ENCODE measurements at regions of chr16 and their contacts with region 1.

Region 1: DNA sequence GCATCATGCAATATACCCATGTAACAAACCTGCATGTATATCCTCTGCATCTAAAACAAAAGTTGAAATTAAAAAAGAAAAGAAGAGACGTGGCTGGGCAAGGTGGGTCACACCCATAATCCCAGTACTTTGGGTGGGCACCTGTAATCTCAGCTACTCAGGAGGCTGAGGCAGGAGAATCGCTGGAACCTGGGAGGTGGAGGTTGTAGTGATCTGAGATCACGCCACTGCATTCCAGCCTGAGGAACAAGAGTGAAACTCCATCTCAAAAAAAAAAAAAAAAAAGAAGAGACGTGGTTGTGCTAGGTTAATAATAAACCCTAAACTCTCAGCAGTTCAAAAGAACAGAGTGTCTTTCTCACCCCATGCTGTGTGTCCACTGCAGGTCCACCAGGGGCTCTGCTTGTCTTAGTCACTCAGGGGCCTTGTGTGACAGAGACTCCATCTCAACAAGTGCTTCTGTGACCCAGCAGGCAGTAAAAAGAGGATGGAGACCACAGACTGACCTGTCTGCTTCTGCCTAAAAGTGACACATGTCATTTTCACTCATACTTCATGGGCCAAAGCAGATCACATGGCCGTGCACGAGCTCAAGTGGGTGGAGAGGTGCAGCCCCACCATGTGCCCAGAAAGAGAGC is 22.3 kb upstream of the N4BP1 start:
- DNase-seq: no peak
- H3K4me3 ChIP-seq: no peak overlapping the region
- H3K27ac ChIP-seq: no peak overlapping the region
- H3K4me1 ChIP-seq: no peaks in the 10 kb centered on the region; a peak in 2 of 4 replicates
- H3K27me3 ChIP-seq: no peaks in the 10 kb centered on the region
- CTCF ChIP-seq: no peak
- EP300 ChIP-seq: no peak
- RAD21 ChIP-seq: no peak

Region 2: GRCh38 chr16:48164907-48165726 is 467.1 kb before region 1 on chr16:
- CTCF ChIA-PET with region 1: interaction called, 10 read pairs
- POLR2A ChIA-PET with region 1: no interaction called
- DNase-seq: peak; percentile 88
- H3K4me3 ChIP-seq: peak overlapping the region in 1 of 2 experiments; percentile 12; a peak in 1 of 4 replicates
- H3K27ac ChIP-seq: no peak overlapping the region
- H3K4me1 ChIP-seq: peaks cover 0 to 4% of the 10 kb centered on the region in 2 experiments; a peak in 1 of 4 replicates
- H3K27me3 ChIP-seq: no peaks in the 10 kb centered on the region
- CTCF ChIP-seq: peak; percentile 88
- EP300 ChIP-seq: no peak
- RAD21 ChIP-seq: peak; percentile 93

Region 3: DNA sequence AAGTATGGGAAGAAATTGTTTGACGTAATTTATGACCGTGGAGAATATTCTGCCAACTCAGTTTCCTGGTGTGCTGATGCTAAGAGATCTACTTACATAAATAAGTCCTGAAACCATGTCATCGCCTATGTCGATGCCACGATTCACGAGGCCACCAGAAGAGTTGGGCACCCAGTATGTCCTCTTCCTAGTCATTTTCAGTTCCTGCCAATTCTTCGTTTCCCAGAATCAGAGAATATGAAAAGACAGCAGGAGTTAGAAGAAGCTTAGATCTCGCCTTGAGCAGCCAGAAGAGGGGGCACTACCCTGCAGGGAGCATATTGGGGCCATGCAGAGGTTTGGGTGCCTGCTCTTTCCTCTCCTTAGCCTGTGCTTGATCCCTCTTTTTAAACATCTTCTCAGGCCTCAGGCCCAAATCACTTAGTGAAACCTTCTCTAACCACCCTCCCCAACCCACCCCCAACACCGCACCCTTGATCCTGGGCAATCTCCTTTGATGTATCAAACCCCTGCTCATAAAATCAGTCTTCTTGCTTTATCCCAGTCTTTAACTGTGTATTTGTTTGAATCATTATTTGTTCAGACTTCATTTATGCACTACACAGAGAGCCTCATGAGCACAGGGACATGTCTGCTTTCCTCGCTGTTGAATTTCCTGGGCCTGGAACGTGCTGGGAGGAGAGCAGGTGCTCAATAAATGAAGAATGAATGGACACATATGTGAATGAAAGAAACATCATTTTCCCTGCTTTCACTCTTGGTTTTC is 400.3 kb before region 1 on chr16:
- CTCF ChIA-PET with region 1: interaction called, 19 read pairs
- POLR2A ChIA-PET with region 1: no interaction called
- DNase-seq: peak; percentile 45
- H3K4me3 ChIP-seq: no peak overlapping the region
- H3K27ac ChIP-seq: no peak overlapping the region
- H3K4me1 ChIP-seq: no peaks in the 10 kb centered on the region
- H3K27me3 ChIP-seq: no peaks in the 10 kb centered on the region
- CTCF ChIP-seq: peak; percentile 44
- EP300 ChIP-seq: no peak
- RAD21 ChIP-seq: peak; percentile 52

Region 4: GRCh38 chr16:48256579-48257177 is 375.6 kb before region 1 on chr16:
- CTCF ChIA-PET with region 1: interaction called, 14 read pairs
- POLR2A ChIA-PET with region 1: no interaction called
- DNase-seq: no peak
- H3K4me3 ChIP-seq: no peak overlapping the region
- H3K27ac ChIP-seq: no peak overlapping the region
- H3K4me1 ChIP-seq: no peaks in the 10 kb centered on the region
- H3K27me3 ChIP-seq: no peaks in the 10 kb centered on the region
- CTCF ChIP-seq: no peak
- EP300 ChIP-seq: no peak
- RAD21 ChIP-seq: no peak

Region 5: DNA sequence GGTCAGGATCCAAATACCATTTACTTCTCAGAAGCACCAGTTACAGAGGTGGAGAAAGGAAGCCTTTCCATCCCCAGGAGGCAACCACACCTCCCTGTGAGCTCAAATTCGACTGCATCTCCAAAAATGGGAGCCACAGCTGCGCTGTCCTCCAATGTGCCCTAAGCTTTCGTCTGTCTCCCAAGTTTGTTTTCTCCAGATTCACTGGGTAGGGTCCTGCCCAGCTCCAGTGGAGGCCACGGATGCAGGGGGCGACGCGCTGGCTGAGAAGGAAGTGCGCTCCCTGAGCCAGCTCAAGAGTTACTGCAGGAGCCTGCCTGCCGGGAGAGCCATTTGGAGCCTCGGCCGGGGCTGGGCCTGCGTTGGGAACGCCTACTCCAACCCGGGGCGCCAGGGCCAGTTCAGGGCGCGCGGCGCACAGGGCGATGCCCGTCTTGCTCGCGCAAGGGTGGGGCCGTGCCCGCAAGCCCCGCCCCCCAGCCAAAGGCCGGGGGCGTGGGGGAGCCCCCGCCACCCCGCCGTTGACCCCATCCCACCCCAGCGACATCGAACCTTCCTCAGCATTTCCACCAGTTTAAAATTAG is 266.6 kb before region 1 on chr16:
- CTCF ChIA-PET with region 1: interaction called, 12 read pairs
- POLR2A ChIA-PET with region 1: no interaction called
- DNase-seq: peak; percentile 90
- H3K4me3 ChIP-seq: peak overlapping the region; percentile 63 to 86
- H3K27ac ChIP-seq: peak overlapping the region; percentile 82 to 91
- H3K4me1 ChIP-seq: peaks cover 14 to 27% of the 10 kb centered on the region in 2 experiments; a peak in 3 of 4 replicates
- H3K27me3 ChIP-seq: no peaks in the 10 kb centered on the region
- CTCF ChIP-seq: no peak
- EP300 ChIP-seq: no peak
- RAD21 ChIP-seq: no peak; the same call in 1 of the 2 replicates

Region 6: GRCh38 chr16:48479955-48480354 is 152.3 kb before region 1 on chr16:
- CTCF ChIA-PET with region 1: no interaction called
- POLR2A ChIA-PET with region 1: no interaction called
- DNase-seq: no peak
- H3K4me3 ChIP-seq: no peak overlapping the region
- H3K27ac ChIP-seq: no peak overlapping the region
- H3K4me1 ChIP-seq: no peaks in the 10 kb centered on the region
- H3K27me3 ChIP-seq: no peaks in the 10 kb centered on the region
- CTCF ChIP-seq: no peak
- EP300 ChIP-seq: no peak
- RAD21 ChIP-seq: no peak

Region 7: DNA sequence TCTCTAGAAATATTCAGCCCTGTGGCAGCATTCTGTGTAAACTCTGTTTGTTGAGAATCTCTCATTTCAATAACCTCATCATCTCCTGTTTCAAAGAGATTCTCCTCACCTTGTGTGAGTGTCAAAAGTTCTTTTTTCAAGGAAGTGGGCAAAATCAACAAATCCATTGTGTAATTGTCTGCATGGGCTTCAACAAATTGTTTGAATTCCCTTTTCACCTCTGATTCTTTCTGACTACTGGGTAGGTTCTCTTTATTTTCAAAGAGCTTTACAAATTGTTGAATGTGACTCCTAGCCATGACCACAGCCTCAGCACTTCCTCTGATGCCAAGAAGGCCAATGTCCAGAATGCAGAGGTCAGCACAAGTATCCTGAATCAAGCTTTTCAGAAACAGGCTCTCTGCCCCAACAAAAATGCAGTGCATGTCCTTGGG is 70.3 kb before region 1 on chr16:
- CTCF ChIA-PET with region 1: interaction called, 10 read pairs
- POLR2A ChIA-PET with region 1: no interaction called
- DNase-seq: no peak
- H3K4me3 ChIP-seq: no peak overlapping the region
- H3K27ac ChIP-seq: no peak overlapping the region; a peak in 1 of 4 replicates
- H3K4me1 ChIP-seq: peaks cover 2 to 6% of the 10 kb centered on the region in 2 experiments; a peak in 2 of 4 replicates
- H3K27me3 ChIP-seq: no peaks in the 10 kb centered on the region
- CTCF ChIP-seq: no peak
- EP300 ChIP-seq: no peak
- RAD21 ChIP-seq: no peak

Region 8: DNA sequence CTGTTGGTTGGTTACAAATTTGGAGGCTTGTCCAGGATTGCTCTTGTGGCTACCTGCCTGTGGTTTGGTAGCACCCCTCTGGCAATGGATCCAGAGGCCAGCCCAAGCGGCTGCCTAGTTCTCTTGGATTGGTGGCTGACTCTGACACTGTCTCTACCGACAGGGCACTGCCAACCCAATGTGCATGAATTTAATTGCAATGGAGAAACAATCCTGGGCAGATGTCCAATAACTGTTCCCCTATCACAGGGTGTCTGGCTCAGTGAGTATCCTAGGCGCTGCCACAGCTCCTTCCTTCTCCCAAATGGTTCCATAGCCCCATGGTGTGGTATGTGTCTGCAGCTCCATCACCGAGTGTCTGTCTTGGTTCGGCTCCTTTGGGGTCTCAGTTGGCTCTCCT is 41.8 kb before region 1 on chr16:
- CTCF ChIA-PET with region 1: no interaction called
- POLR2A ChIA-PET with region 1: no interaction called
- DNase-seq: no peak
- H3K4me3 ChIP-seq: no peak overlapping the region
- H3K27ac ChIP-seq: no peak overlapping the region
- H3K4me1 ChIP-seq: no peaks in the 10 kb centered on the region
- H3K27me3 ChIP-seq: no peaks in the 10 kb centered on the region
- CTCF ChIP-seq: no peak
- EP300 ChIP-seq: no peak
- RAD21 ChIP-seq: no peak

Region 9: DNA sequence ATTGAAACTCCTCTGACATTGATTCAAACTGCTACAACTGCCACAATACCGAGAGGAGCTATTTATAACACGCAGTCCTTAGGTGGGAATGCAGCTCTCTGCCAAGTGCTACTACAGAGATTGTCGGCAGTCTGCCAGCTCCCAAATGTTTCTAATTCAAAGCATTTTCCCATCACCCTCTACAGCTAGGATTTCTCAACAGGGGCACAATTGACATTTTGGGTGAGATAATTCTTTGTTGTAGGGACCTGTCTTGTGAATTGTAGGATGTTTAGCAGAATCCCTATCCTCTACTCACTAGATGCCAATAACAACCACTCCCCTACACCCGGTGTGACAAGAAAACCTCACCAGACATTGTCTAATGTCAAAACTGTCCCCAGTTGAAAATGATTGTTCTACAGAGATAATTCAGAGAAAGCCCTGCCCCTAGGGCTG is 14.5 kb before region 1 on chr16:
- CTCF ChIA-PET with region 1: interaction called, 33 read pairs
- POLR2A ChIA-PET with region 1: no interaction called
- DNase-seq: no peak
- H3K4me3 ChIP-seq: no peak overlapping the region
- H3K27ac ChIP-seq: no peak overlapping the region
- H3K4me1 ChIP-seq: peaks cover 4 to 5% of the 10 kb centered on the region in 2 experiments; a peak in 3 of 4 replicates
- H3K27me3 ChIP-seq: no peaks in the 10 kb centered on the region
- CTCF ChIP-seq: no peak
- EP300 ChIP-seq: no peak
- RAD21 ChIP-seq: no peak